HepG2 (cell line): ENCODE measurements at regions of chr14 and their contacts with region 1.

Region 1: GRCh38 chr14:22556990-22557623 is 31.9 kb downstream of the DAD1 start:
- DNase-seq: peak; percentile 74
- ATAC-seq: peak; percentile 70
- H3K4me3 ChIP-seq: peak overlapping the region; percentile 27 to 66 (median 28); a peak in 4 of 6 replicates
- H3K27ac ChIP-seq: no peak overlapping the region
- H3K4me1 ChIP-seq: peaks cover 63% of the 10 kb centered on the region
- H3K27me3 ChIP-seq: peaks cover 9 to 42% of the 10 kb centered on the region in 2 experiments; a peak in 4 of 5 replicates
- CTCF ChIP-seq: peak; percentile 98
- EP300 ChIP-seq: peak in 1 of 2 experiments; percentile 51; a peak in 1 of 4 replicates
- POLR2A ChIP-seq: no peak
- RAD21 ChIP-seq: peak; percentile 100

Region 2: GRCh38 chr14:22143363-22143762 is 413.7 kb before region 1 on chr14:
- CTCF ChIA-PET with region 1: no interaction called
- POLR2A ChIA-PET with region 1: no interaction called
- in situ Hi-C with region 1: no loop called
- intact Hi-C with region 1: no loop called
- DNase-seq: no peak
- ATAC-seq: no peak
- H3K4me3 ChIP-seq: no peak overlapping the region
- H3K27ac ChIP-seq: no peak overlapping the region
- H3K4me1 ChIP-seq: no peaks in the 10 kb centered on the region
- H3K27me3 ChIP-seq: no peaks in the 10 kb centered on the region
- CTCF ChIP-seq: no peak
- EP300 ChIP-seq: no peak
- POLR2A ChIP-seq: no peak
- RAD21 ChIP-seq: no peak

Region 3: DNA sequence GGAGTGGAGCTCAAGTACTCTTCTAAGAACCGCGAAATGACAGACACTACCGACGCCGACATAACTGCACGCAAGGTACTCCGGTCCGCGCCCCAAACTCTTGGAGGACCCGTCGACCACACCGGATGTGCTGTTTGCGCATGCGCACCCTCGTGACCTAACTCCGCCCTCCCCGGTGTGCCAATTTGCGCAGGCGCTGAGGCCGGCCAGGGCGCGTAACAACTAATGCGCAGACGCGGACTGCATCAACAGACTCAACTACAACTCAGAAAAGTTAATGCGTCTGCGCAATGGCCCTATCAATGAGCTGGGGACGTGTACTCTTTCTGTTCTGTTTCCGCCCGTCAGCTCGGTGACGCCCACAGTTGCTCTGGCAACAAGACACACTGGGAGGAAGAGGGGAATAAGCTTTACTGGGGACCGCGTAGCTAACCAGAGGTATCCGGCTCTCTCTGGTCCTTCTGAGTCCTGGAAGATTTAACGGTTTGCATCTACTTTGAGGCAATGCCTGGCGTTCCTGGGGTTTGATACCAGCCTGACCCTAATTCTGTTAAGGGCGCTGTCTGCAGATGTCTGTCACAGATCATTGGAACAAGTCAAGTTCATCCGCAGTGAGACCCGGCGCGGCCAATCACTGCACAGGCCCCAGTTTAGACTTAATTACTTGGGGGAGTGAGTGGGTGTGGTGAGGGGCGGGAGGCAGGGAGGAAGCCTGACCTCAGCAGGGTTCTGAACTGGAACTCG is 32.2 kb after region 1 on chr14 and contains the start of gene DAD1:
- CTCF ChIA-PET with region 1: interaction called, 21 read pairs
- POLR2A ChIA-PET with region 1: interaction called, 21 read pairs
- in situ Hi-C with region 1: no loop called
- intact Hi-C with region 1: loop called (anchors 1 kb)
- DNase-seq: peak; percentile 100
- ATAC-seq: peak; percentile 98
- H3K4me3 ChIP-seq: peak within 1 kb of the TSS; percentile 85 to 92 (median 86)
- H3K27ac ChIP-seq: peak within 1 kb of the TSS; percentile 80
- H3K4me1 ChIP-seq: peaks cover 52% of the 10 kb centered on the region
- H3K27me3 ChIP-seq: peaks cover 0 to 23% of the 10 kb centered on the region in 2 experiments; a peak in 2 of 5 replicates
- CTCF ChIP-seq: no peak
- EP300 ChIP-seq: 0 out of 4 replicates have a peak, but pooled peaks of 1 of the 2 experiments have one; percentile 19
- POLR2A ChIP-seq: peak in 1 of 2 experiments; percentile 97; a peak in 2 of 4 replicates
- RAD21 ChIP-seq: peak; percentile 67; the same call in 1 of the 2 replicates
- total RNA-seq, gene DAD1: 385 and 558 TPM in 2 replicates

Region 4: GRCh38 chr14:22715186-22715812 is 158.2 kb after region 1 on chr14:
- CTCF ChIA-PET with region 1: interaction called, 13 read pairs
- POLR2A ChIA-PET with region 1: no interaction called
- in situ Hi-C with region 1: no loop called
- intact Hi-C with region 1: loop called (anchors 5 kb)
- DNase-seq: no peak
- ATAC-seq: no peak; the same call in 2 of the 3 replicates
- H3K4me3 ChIP-seq: no peak overlapping the region
- H3K27ac ChIP-seq: no peak overlapping the region
- H3K4me1 ChIP-seq: peaks cover 13% of the 10 kb centered on the region
- H3K27me3 ChIP-seq: peaks cover 0 to 13% of the 10 kb centered on the region in 2 experiments; a peak in 1 of 5 replicates
- CTCF ChIP-seq: no peak
- EP300 ChIP-seq: no peak
- POLR2A ChIP-seq: no peak
- RAD21 ChIP-seq: no peak

Region 5: DNA sequence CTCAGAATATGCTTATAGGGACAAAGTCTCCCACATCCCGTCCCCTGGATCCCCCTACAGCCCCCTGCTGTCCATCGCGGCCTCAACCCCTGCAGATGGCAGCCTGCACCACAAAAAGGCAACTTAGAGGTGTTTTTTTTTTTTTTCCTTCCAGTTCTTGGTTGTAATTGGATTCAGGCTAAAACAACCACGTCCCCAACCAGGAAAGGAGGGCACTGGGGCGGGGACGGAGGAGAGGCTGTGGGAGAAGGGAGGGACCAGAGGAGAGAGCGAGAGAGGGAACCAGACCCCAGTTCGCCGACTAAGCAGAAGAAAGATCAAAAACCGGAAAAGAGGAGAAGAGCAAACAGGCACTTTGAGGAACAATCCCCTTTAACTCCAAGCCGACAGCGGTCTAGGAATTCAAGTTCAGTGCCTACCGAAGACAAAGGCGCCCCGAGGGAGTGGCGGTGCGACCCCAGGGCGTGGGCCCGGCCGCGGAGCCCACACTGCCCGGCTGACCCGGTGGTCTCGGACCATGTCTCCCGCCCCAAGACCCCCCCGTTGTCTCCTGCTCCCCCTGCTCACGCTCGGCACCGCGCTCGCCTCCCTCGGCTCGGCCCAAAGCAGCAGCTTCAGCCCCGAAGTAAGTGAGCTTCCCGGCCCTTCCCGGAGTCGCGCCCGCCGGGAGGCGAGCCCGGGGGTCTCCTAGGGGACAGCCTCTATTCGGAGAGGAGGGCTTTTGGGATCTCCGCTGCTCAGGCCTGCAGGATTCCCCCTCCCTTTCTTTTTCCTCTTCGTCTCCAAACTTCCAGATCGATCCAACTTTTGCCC is 279.4 kb after region 1 on chr14 and contains the start of gene MMP14:
- CTCF ChIA-PET with region 1: interaction called, 10 read pairs
- POLR2A ChIA-PET with region 1: no interaction called
- in situ Hi-C with region 1: no loop called
- intact Hi-C with region 1: no loop called
- DNase-seq: no peak
- ATAC-seq: peak; percentile 11
- H3K4me3 ChIP-seq: peak within 1 kb of the TSS; percentile 55 to 71 (median 57)
- H3K27ac ChIP-seq: no peak within 1 kb of the TSS
- H3K4me1 ChIP-seq: peaks cover 43% of the 10 kb centered on the region
- H3K27me3 ChIP-seq: no peaks in the 10 kb centered on the region
- CTCF ChIP-seq: peak; percentile 42; the same call in 1 of the 2 replicates
- EP300 ChIP-seq: no peak
- POLR2A ChIP-seq: 0 out of 4 replicates have a peak, but pooled peaks of 1 of the 2 experiments have one; percentile 8
- RAD21 ChIP-seq: no peak
- total RNA-seq, gene MMP14: 1.6 and 5.2 TPM in 2 replicates

Region 6: DNA sequence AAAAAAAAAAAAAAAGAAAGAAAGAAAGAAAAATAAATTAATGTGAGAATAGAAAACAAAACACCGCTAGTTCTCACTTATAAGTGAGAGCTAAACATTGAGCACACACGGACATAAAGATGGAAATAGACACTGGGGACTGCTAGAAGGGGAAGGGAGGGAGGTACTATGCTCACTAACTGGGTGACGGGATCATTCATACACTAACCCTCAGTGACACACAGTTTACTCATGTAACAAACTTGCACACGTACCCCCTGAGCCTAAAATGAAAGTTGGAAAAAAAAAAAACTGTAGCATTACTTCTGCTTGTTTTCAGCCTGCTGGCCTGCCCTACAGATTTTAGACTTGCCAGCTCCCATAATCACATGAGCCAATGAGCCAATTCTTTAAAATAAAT is 382.6 kb after region 1 on chr14:
- CTCF ChIA-PET with region 1: interaction called, 4 read pairs
- POLR2A ChIA-PET with region 1: no interaction called
- in situ Hi-C with region 1: no loop called
- intact Hi-C with region 1: loop called (anchors 1 kb)
- DNase-seq: no peak
- ATAC-seq: no peak
- H3K4me3 ChIP-seq: no peak overlapping the region
- H3K27ac ChIP-seq: no peak overlapping the region
- H3K4me1 ChIP-seq: no peaks in the 10 kb centered on the region
- H3K27me3 ChIP-seq: no peaks in the 10 kb centered on the region
- CTCF ChIP-seq: no peak
- EP300 ChIP-seq: no peak
- POLR2A ChIP-seq: no peak
- RAD21 ChIP-seq: no peak

Region 7: DNA sequence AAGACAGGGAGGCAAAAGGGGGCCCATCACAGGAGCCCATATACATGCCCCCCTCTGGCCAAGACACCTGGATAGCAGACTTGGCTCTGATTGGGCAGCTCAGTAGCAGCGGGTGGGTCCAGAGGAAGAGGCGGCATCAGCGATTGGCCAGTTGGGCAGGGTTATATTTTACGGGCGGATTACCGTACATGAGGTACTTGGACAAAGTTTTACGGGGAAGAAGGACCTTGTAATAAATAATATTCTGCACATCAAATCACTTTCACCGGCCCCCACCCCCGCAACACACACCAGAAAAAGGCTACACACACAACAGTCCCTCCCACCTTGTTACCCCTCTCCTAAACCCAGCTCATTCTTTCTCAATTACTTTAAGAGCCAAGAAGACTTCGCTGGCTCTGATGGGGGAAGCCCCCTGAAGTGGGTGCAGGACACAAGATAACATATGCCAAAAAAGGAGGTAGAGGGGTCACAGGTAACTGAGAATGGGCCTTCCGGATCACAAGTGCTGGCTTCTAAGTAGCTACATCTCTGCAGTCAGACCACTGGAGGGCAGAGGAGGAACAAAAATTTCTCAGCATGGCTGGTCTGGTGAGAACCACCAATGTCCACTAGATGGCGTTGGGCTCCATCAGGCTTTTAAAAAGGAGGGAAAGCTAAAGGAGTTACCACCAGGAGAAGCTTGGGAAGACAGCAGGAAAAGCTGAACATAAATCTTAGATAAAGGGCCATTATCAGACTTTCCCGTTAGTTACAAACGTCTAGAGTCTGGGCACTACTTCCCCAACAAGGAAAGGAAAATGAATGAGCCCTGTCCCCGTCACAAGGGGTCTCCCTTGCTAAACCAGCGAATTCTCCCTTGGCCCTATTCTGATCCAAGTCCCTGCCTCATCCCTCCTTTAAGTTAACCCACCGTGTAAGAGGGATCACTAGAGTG is 511.6 kb after region 1 on chr14:
- CTCF ChIA-PET with region 1: interaction called, 10 read pairs
- POLR2A ChIA-PET with region 1: no interaction called
- in situ Hi-C with region 1: no loop called
- intact Hi-C with region 1: no loop called
- DNase-seq: peak; percentile 98
- ATAC-seq: peak; percentile 79
- H3K4me3 ChIP-seq: no peak overlapping the region
- H3K27ac ChIP-seq: peak overlapping the region; percentile 5
- H3K4me1 ChIP-seq: peaks cover 42% of the 10 kb centered on the region
- H3K27me3 ChIP-seq: no peaks in the 10 kb centered on the region; a peak in 1 of 5 replicates
- CTCF ChIP-seq: peak; percentile 99
- EP300 ChIP-seq: no peak; a peak in 1 of 4 replicates
- POLR2A ChIP-seq: peak in 1 of 2 experiments; percentile 24; a peak in 2 of 4 replicates
- RAD21 ChIP-seq: peak; percentile 94